Gastrocnemius medialis (tissue), 4 donors: ENCODE measurements at regions of chr3 and their contacts with region 1.

Region 1: GRCh38 chr3:135136361-135137100 is 341.5 kb downstream of the EPHB1 start:
- DNase-seq: peak; percentile 80
- ATAC-seq: peak; percentile 98
- H3K4me3 ChIP-seq: no peak overlapping the region
- H3K27ac ChIP-seq: peak overlapping the region; percentile 78 to 88 (median 82)
- H3K4me1 ChIP-seq: peaks cover 29 to 31% of the 10 kb centered on the region in 2 donors
- H3K27me3 ChIP-seq: no peaks in the 10 kb centered on the region
- CTCF ChIP-seq: no peak
- POLR2A ChIP-seq: no peak

Region 2: GRCh38 chr3:134721219-134721618 is 415.3 kb before region 1 on chr3:
- in situ Hi-C with region 1: no loop called
- intact Hi-C with region 1: loop called (anchors 5 kb)
- DNase-seq: no peak
- ATAC-seq: no peak
- H3K4me3 ChIP-seq: no peak overlapping the region
- H3K27ac ChIP-seq: no peak overlapping the region
- H3K4me1 ChIP-seq: peaks cover 25 to 33% of the 10 kb centered on the region in 2 donors
- H3K27me3 ChIP-seq: no peaks in the 10 kb centered on the region
- CTCF ChIP-seq: no peak
- POLR2A ChIP-seq: no peak

Region 3: DNA sequence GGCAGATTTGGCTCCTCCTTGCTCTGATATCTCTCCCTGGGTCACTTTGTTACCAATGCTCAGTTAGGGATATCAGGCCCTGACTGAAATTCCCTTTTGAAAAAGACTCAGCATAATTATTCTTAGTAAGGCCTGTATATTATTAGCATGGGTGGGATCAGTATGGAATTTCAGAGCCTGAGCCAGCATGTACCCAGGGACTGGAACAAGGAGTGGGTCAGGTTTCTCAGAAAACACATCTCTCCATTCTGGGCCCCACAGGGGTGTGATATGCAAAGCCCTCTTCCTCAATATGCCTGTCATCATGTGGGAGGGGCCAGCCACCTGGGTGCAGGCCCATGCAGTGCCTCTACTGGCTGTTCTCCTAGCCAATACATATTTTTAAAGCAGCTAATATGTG is 81.8 kb after region 1 on chr3:
- in situ Hi-C with region 1: no loop called
- intact Hi-C with region 1: loop called (anchors 2 kb)
- DNase-seq: peak; percentile 86 to 91
- ATAC-seq: peak; percentile 89 to 92
- H3K4me3 ChIP-seq: no peak overlapping the region
- H3K27ac ChIP-seq: peak overlapping the region; percentile 84 to 95 (median 90)
- H3K4me1 ChIP-seq: peaks cover 35 to 43% of the 10 kb centered on the region in 2 donors
- H3K27me3 ChIP-seq: no peaks in the 10 kb centered on the region
- CTCF ChIP-seq: peak in 2 of 5 experiments; percentile 29 to 40
- POLR2A ChIP-seq: peak in 1 of 2 donors; percentile 42